Left ventricle myocardium superior (tissue), 1 donor: ENCODE measurements at regions of chr17 and their contacts with region 1.

Region 1: GRCh38 chr17:10618202-10618635 is 38.9 kb downstream of the MYH3 start:
- DNase-seq: peak; percentile 64
- ATAC-seq: peak; percentile 89

Region 2: DNA sequence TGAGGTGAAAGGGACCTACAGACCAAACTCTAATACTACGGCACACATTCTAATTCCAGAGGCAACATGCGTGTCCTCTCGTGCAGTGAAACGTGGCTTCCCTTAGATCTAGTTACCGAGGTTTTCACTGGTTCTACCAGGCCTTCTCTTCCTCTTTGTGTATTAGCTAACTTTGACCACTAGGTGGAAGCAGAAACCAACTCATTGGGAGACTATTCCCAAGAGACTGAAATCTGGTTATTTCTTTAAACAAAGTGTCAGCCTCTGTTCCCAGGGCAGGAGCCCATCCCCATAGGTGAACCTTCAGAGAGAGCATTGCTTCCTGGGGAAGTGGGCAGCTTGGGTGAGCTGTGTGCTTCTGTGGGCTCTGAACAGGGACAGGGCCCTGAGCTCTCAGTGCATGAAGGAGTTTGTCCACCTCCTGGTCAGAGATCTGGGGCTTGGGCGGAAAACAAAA is 693.5 kb before region 1 on chr17:
- intact Hi-C with region 1: loop called (anchors 10 kb)
- DNase-seq: no peak
- ATAC-seq: peak; percentile 59

Region 3: GRCh38 chr17:10435096-10435495 is 183.1 kb before region 1 on chr17:
- intact Hi-C with region 1: no loop called
- DNase-seq: no peak
- ATAC-seq: no peak